Mucosa of descending colon (tissue), 3 donors: ENCODE measurements at regions of chr15 and their contacts with region 1.

Region 1: DNA sequence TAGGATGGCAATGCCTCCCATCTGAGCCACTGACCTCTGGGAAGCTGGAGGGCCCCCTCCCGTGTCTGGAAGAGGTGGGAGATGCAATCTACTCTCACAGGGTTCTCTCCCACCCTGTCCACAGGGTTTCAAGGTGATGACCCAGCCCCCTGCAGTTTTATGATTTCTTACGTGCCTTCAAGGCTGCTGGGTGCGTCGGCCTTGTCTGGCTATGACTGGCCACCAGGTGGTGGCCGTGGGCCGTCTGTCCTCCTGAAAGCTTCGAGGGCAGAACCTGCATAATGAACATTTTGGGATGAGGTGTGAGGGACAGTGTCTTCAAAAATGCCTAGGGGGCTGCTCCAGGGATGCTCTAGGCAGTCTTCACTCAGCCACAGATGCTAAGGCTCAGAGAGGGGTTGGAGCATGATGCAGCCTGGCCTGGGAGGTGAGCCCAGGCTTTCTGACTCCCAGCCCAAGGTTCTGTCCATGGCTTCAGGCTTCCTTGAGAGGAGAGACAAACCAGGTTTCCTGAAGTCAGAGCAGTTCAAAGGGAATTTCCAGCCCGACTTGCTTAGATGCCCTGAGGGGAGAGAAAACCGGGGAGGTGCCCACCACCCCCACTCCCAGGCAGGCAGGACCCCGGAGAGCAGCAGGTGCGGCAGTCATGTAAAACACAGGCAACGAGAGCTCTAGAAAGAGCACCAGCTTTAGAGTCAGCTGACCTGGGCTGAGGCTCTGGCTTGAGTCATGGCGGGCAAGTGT is 18.7 kb downstream of the ISG20 start:
- DNase-seq: peak in 1 of 3 donors; percentile 47
- ATAC-seq: peak; percentile 65
- H3K4me3 ChIP-seq: no peak overlapping the region
- H3K4me1 ChIP-seq: no peaks in the 10 kb centered on the region
- CTCF ChIP-seq: peak; percentile 42

Region 2: GRCh38 chr15:88834211-88834812 is 176.8 kb after region 1 on chr15:
- intact Hi-C with region 1: loop called in 1 of 2 experiments (anchors 10 kb)
- DNase-seq: peak in 2 of 3 donors; percentile 45 to 47
- ATAC-seq: peak; percentile 53
- H3K4me3 ChIP-seq: no peak overlapping the region
- H3K4me1 ChIP-seq: no peaks in the 10 kb centered on the region
- CTCF ChIP-seq: no peak